Posterior cingulate gyrus (tissue), 11 donors: ENCODE measurements at regions of chr10 and their contacts with region 1.

Region 1: DNA sequence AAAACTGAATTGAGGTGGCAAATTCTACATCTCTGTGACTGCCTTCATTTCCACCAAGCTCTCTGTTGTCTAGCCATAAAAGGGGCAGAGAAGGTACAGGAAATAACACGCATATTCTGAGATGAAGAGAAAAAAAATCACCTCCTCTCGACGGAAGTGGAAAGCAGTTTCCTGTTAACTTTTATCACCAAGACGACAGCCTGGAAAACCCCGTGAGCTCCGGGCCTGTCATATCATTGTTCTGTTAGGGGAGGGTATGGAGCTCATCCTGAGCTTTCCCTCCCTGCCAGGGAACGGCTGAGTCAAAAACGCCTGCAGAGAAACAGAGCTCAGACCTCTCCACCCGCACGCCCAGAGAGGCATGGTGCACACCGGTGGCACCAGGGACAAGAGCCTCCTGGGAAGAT is 200.3 kb downstream of the PRPF18 start:
- DNase-seq: peak in 2 of 10 donors; percentile 85 to 86

Region 2: GRCh38 chr10:13698217-13698616 is 88.8 kb before region 1 on chr10:
- intact Hi-C with region 1: no loop called
- DNase-seq: peak in 1 of 10 donors; percentile 50

Region 3: GRCh38 chr10:13949844-13950595 is 163.0 kb after region 1 on chr10:
- intact Hi-C with region 1: loop called (anchors 10 kb)
- DNase-seq: peak in 1 of 10 donors; percentile 16

Region 4: DNA sequence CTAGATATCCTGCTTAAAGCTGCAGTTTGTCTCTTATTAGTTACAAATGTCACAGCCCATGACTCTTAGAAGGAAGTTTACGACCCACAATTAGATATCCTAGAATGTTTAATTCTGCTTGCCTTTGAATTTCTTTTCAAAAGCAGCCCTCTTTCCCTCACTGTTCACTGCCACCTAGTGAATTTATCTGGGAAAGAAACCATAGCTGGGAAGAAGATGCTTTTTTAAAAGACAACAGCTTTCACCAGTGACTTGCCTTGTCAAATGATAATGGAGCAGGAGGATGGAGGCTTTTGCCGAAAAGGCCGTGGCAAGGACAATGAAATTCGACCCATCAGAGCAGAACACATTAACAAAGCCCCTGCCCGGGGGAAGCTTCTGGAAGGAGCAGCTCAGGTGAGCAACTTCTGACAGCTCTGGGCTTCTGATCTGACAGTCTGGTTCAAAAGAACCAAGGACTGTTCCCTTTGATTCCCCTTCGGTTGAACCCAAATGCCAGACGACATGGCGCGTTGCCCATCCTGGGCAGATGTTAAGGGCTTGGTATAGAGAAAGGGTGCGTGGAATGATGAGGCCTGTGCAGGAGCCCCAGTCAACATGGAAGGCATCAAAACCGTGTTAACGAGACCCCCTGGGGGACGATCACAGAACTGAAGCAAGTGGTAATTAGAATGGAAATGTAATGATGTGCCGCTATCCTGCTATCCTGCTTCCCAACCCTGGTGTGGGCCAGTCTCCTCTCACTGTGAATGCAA is 306.9 kb after region 1 on chr10:
- intact Hi-C with region 1: loop called (anchors 2 kb)
- DNase-seq: peak in 1 of 10 donors; percentile 70

Region 5: GRCh38 chr10:14478604-14479003 is 691.6 kb after region 1 on chr10:
- intact Hi-C with region 1: loop called (anchors 2 kb)
- DNase-seq: peak; percentile 67 to 97 (median 78)